Common myeloid progenitor, CD34-positive (primary cell): ENCODE measurements at regions of chr14 and their contacts with region 1.

Region 1: DNA sequence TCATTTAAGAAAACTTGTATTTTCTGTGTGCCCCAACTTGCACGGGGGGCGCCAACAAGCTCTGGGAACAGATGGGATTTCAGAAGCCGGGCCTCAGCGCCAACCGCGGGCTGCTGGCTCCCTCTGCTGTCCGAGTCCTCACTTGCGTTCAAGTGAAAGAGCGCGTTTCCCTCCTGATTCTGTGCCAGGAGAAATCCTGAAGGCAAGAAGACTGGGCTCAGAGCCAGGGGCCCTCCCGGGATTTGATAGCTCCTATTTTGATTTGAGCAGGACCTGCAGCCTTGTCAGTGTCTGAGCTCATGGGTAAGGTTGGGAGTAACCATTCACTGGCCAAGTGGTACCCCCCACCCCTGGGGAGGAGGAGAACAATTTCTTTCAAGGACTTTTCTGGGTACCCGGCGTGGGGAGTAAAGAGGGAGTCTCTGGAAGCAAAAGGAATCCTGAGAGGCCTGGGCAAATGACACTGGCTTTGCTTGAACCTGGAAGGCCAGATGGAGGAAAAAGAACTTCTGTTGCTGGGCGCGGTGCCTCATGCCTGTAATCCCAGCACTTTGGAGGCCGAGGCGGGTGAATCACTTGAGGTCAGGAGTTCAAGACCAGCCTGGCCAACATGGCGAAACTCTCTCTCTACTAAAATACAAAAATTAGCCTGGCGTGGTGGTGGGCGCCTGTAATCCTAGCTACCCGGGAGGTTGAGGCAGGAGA is 179.0 kb upstream of the RGS6 start:
- DNase-seq: peak; percentile 72 to 80 (median 75)
- H3K4me3 ChIP-seq: peak overlapping the region in 2 of 7 experiments; percentile 30 to 43
- H3K27ac ChIP-seq: no peak overlapping the region
- H3K4me1 ChIP-seq: peaks cover 0 to 8% (median 2%) of the 10 kb centered on the region in 4 experiments
- H3K27me3 ChIP-seq: peaks cover 0 to 2% (median 0%) of the 10 kb centered on the region in 5 experiments

Region 2: DNA sequence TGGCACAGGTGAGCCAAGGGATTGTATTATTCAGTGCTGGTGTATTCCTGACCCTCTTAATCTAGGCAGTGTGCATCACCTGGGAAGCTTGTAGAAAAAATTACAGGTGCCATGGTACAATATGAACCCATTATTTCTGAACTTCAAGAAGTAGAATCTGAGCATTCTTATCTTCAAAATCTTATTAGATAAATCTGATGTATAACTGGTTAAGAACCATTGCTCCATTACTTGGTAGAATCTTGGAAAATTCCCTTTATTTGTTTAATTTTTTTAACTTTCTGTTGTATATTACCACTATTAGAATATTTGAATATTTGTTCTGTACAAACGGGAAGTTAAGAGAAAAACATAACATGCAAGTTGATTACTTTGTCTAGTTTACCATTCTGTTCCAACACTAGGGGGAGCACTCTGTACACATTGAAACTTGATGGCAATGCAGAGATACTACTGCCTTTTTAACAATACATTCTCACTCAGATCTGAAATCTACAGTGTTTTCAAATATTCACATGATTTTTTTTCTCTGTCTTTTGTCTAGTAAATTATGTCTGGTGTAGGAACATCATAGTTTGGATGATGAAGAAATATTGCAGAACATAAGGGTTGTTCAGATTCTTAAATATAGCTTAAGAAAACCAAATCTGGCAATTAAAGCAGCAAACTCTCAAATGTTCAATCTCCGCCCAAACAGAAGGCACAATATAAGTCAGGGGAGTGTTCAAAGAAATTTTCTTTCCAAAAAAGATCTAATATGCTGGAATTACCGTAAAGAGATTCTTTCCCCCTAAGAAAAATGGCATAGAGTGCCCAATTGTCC is 649.4 kb before region 1 on chr14:
- CTCF ChIA-PET with region 1: interaction called, 12 read pairs
- POLR2A ChIA-PET with region 1: no interaction called
- DNase-seq: peak; percentile 64 to 88 (median 86)
- H3K4me3 ChIP-seq: no peak overlapping the region
- H3K27ac ChIP-seq: no peak overlapping the region
- H3K4me1 ChIP-seq: no peaks in the 10 kb centered on the region
- H3K27me3 ChIP-seq: no peaks in the 10 kb centered on the region

Region 3: DNA sequence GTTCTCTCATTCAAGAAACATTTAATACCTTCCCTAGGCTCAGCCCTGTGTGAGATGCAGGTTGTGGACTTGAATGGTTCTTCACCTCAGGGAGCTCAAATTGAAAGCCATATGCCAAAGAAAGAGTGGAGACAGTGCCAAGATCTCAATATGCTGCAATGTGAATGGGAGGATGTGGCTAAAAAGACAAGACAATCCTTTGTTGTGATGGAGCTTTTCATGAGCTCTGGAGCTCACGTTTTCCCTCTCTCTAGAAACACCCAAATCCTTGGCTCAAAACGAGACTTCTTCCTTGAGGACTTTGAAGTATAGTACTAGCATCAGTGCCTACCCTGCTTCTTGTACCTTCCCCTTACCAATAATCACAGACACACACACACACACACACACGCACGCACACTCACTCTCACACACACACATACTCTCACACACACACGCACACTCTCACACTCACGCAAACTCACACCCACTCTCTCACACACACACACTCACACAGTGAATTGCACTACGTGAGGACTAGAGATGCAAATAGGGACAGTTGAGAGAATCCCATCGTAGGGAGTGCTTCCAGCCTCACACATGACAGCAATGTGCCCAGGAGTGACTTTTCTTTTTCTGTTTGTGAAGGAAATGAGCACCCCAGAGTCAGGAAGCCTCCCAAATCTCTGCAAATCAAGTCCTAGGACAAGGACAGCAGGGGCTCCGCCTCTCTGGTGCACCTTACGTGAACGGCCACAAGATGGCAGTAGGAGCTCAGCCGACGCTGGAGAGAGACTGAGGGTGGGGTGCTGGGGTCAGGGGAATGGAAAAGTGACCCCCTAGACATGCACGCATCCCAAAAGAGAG is 614.6 kb before region 1 on chr14:
- CTCF ChIA-PET with region 1: interaction called, 121 read pairs
- POLR2A ChIA-PET with region 1: interaction called, 3 read pairs
- DNase-seq: peak; percentile 39 to 65 (median 56)
- H3K4me3 ChIP-seq: peak overlapping the region in 1 of 7 experiments; percentile 5
- H3K27ac ChIP-seq: no peak overlapping the region
- H3K4me1 ChIP-seq: peaks cover 0 to 19% (median 6%) of the 10 kb centered on the region in 4 experiments
- H3K27me3 ChIP-seq: no peaks in the 10 kb centered on the region